GM12878 (cell line): ENCODE measurements at regions of chr1 and their contacts with region 1.

Region 1: DNA sequence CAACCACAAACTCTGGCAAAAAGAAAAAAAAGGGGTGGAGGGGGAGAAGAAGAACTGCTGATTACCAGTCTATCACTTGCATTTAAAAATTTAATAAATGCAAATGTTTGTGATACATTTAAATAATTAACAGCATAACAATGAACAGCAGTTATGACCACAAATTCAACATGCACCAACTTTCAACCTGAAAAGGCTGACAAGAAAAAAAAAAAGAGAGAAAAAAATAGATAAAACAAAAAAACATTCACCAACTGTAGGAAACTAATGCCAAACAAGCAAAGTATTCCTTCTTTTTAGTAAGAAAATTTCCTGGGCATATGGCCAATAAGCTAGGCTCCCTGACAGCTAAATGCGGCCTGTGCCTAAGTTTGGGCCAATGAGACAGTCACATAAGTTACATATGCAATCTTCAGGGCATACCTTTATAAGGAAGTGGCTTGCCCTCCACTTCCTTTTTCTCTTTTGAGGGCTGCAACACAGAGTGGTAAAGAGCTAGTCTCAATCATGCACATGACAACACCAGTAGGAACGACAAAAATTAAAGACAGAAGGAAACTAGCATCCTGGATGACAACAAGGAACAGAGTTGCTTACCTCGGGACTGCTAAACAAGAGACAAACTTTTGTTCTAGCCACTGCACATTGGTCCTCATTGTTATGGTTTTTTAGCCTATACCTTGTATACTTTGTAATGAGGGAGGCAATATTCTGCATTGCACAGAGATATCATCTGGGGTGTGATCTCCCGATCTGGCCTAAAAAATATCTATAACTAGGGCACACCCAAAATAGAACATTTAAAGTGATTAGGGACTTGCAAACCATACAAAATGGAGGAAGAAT is 24.2 kb upstream of the PHTF1 start:
- DNase-seq: peak; percentile 55
- ATAC-seq: peak; percentile 92
- H3K4me3 ChIP-seq: peak overlapping the region; percentile 19; the same call in 1 of the 2 replicates
- H3K27ac ChIP-seq: peak overlapping the region; percentile 51
- H3K4me1 ChIP-seq: peaks cover 36% of the 10 kb centered on the region
- H3K27me3 ChIP-seq: no peaks in the 10 kb centered on the region
- CTCF ChIP-seq: no peak
- EP300 ChIP-seq: 0 out of 4 replicates have a peak, but pooled peaks of 1 of the 2 experiments have one; percentile 4
- POLR2A ChIP-seq: no peak
- RAD21 ChIP-seq: no peak

Region 2: GRCh38 chr1:113768901-113769600 is 14.4 kb before region 1 on chr1:
- CTCF ChIA-PET with region 1: interaction called, 5 read pairs
- POLR2A ChIA-PET with region 1: interaction called, 3 read pairs
- RAD21 ChIA-PET with region 1: interaction called, 5 read pairs
- SMC1A ChIA-PET with region 1: interaction called, 13 read pairs
- in situ Hi-C with region 1: no loop called
- intact Hi-C with region 1: no loop called
- DNase-seq: no peak
- ATAC-seq: peak; percentile 27; the same call in 1 of the 3 replicates
- H3K4me3 ChIP-seq: no peak overlapping the region
- H3K27ac ChIP-seq: no peak overlapping the region
- H3K4me1 ChIP-seq: no peaks in the 10 kb centered on the region
- H3K27me3 ChIP-seq: no peaks in the 10 kb centered on the region
- CTCF ChIP-seq: no peak
- EP300 ChIP-seq: no peak
- POLR2A ChIP-seq: no peak
- RAD21 ChIP-seq: no peak

Region 3: GRCh38 chr1:113811888-113812660 is 28.6 kb after region 1 on chr1 and contains the start of gene RSBN1:
- CTCF ChIA-PET with region 1: interaction called, 4 read pairs
- POLR2A ChIA-PET with region 1: interaction called, 18 read pairs
- RAD21 ChIA-PET with region 1: interaction called, 19 read pairs
- SMC1A ChIA-PET with region 1: interaction called, 23 read pairs
- in situ Hi-C with region 1: no loop called
- intact Hi-C with region 1: no loop called
- DNase-seq: peak; percentile 96
- ATAC-seq: peak; percentile 92
- H3K4me3 ChIP-seq: peak within 1 kb of the TSS; percentile 92
- H3K27ac ChIP-seq: peak within 1 kb of the TSS; percentile 72
- H3K4me1 ChIP-seq: no peaks in the 10 kb centered on the region
- H3K27me3 ChIP-seq: no peaks in the 10 kb centered on the region
- CTCF ChIP-seq: no peak
- EP300 ChIP-seq: peak in 1 of 2 experiments; percentile 80; a peak in 2 of 4 replicates
- POLR2A ChIP-seq: peak; percentile 96
- RAD21 ChIP-seq: no peak
- polyA plus RNA-seq, gene RSBN1: 2.9 to 10.5 TPM